MCF 10A (cell line): ENCODE measurements at regions of chr2 and their contacts with region 1.

Region 1: DNA sequence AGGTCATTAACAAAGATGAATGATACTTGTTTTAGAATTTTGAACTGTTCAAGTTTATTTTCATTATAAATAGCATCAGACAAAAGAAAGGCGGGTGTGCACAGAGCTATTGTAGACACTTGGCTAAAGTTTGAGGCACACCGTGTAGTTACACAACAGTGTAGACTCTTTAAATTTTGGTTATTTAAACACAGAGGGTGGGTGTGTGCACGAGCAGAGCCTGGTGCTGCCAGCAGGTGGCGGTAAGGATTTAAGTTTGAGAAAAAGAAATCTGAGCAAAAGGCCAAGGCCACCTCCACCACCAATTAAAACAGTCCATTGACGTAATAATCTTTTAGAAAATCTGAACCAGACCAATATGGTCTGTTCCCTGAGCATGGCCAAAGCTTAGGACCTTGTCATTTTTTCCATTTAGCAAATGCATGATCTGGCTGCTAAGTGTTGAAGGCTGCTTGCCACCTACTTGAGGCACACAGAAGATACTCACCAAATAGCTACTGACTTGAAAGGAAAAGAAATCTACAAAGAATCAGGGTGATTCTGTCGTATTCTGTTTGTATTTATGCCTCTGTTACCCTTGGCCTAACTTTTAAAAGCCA is 14.3 kb downstream of the COPS7B start:
- DNase-seq: peak; percentile 41
- H3K4me3 Mint-ChIP-seq: no peak overlapping the region
- H3K27ac Mint-ChIP-seq: no peak overlapping the region
- H3K4me1 Mint-ChIP-seq: no peaks in the 10 kb centered on the region
- H3K27me3 Mint-ChIP-seq: no peaks in the 10 kb centered on the region
- CTCF ChIP-seq: peak; percentile 54

Region 2: GRCh38 chr2:231786177-231786916 is 14.2 kb before region 1 on chr2 and contains the start of gene COPS7B:
- CTCF ChIA-PET with region 1: interaction called, 14 read pairs
- POLR2A ChIA-PET with region 1: interaction called, 3 read pairs
- intact Hi-C with region 1: no loop called
- DNase-seq: peak; percentile 69
- H3K4me3 Mint-ChIP-seq: peak within 1 kb of the TSS; percentile 85
- H3K27ac Mint-ChIP-seq: peak within 1 kb of the TSS; percentile 63
- H3K4me1 Mint-ChIP-seq: peaks cover 42% of the 10 kb centered on the region
- H3K27me3 Mint-ChIP-seq: no peaks in the 10 kb centered on the region
- CTCF ChIP-seq: peak; percentile 64
- total RNA-seq, gene COPS7B: 41.5 and 49.9 TPM in 2 replicates

Region 3: GRCh38 chr2:231816327-231817026 is 15.9 kb after region 1 on chr2:
- CTCF ChIA-PET with region 1: interaction called, 10 read pairs
- POLR2A ChIA-PET with region 1: interaction called, 3 read pairs
- intact Hi-C with region 1: no loop called
- DNase-seq: no peak
- H3K4me3 Mint-ChIP-seq: no peak overlapping the region
- H3K27ac Mint-ChIP-seq: no peak overlapping the region
- H3K4me1 Mint-ChIP-seq: no peaks in the 10 kb centered on the region
- H3K27me3 Mint-ChIP-seq: no peaks in the 10 kb centered on the region
- CTCF ChIP-seq: no peak